ENCODE measurements at regions of chr7 and their contacts with region 1.

Region 1: GRCh38 chr7:151808400-151809183 is 68.3 kb downstream of the PRKAG2 start:
- DNase-seq: peak; percentile 87 to 93 (median 89)
- H3K4me3 ChIP-seq: peak overlapping the region in 1 of 3 experiments; percentile 55
- H3K4me3 Mint-ChIP-seq: peak overlapping the region; percentile 61 to 90
- H3K27ac ChIP-seq: peak overlapping the region; percentile 92 to 96
- H3K27ac Mint-ChIP-seq: peak overlapping the region; percentile 97 to 99 (median 98)
- H3K4me1 ChIP-seq: peaks cover 53 to 54% of the 10 kb centered on the region in 2 donors
- H3K4me1 Mint-ChIP-seq: peaks cover 67% of the 10 kb centered on the region
- H3K27me3 ChIP-seq: no peaks in the 10 kb centered on the region
- H3K27me3 Mint-ChIP-seq: peaks cover 0 to 7% (median 0%) of the 10 kb centered on the region in 3 donors
- CTCF ChIP-seq: peak; percentile 11

Region 2: DNA sequence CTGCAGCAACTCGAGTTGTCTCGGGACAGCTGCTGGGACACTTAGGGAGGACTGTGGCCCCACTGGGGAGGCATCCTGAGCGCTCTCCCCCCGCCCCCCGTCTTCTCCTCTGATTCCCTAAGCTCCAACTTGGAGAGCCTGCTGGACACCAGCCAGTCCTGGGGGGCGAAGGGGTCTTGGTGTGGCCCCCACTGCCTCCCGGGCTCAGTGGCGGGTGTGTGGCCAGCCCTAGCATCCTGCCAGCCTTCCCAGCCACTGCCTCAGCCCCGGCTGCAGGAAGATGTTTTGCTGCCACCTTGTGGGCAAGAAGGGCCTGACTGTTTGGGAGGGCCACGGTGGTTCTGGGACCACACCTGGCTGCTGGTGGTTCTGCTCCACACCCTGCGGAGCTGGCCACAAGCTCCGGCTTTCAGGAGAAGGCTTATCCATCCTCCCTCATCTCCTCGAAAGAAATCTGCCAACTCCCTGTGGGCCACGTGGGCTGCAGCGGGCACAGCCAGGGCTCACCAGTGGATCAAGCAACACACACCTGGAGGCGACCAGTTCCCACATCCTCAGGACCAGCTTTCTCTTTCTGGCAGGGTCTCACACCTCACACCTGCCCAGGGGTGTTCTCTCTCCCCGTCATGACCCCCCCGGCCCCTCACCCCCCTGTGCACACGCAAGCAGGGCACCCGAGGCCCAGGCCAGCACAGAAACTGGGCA is 697.5 kb before region 1 on chr7:
- intact Hi-C with region 1: no loop called
- DNase-seq: peak; percentile 61 to 74 (median 72)
- H3K4me3 ChIP-seq: no peak overlapping the region
- H3K4me3 Mint-ChIP-seq: no peak overlapping the region
- H3K27ac ChIP-seq: no peak overlapping the region
- H3K27ac Mint-ChIP-seq: no peak overlapping the region
- H3K4me1 ChIP-seq: peaks cover 3 to 7% of the 10 kb centered on the region in 2 donors
- H3K4me1 Mint-ChIP-seq: peaks cover 16% of the 10 kb centered on the region
- H3K27me3 ChIP-seq: peaks cover 2 to 17% of the 10 kb centered on the region in 2 donors
- H3K27me3 Mint-ChIP-seq: peaks cover 21 to 29% (median 21%) of the 10 kb centered on the region in 3 donors
- CTCF ChIP-seq: peak; percentile 89

Region 3: GRCh38 chr7:151744656-151745638 is 63.6 kb before region 1 on chr7:
- intact Hi-C with region 1: no loop called
- DNase-seq: peak; percentile 92 to 99 (median 93)
- H3K4me3 ChIP-seq: no peak overlapping the region
- H3K4me3 Mint-ChIP-seq: peak overlapping the region; percentile 32 to 50
- H3K27ac ChIP-seq: peak overlapping the region; percentile 36 to 63
- H3K27ac Mint-ChIP-seq: peak overlapping the region; percentile 70 to 96 (median 92)
- H3K4me1 ChIP-seq: peaks cover 40 to 41% of the 10 kb centered on the region in 2 donors
- H3K4me1 Mint-ChIP-seq: peaks cover 52% of the 10 kb centered on the region
- H3K27me3 ChIP-seq: no peaks in the 10 kb centered on the region
- H3K27me3 Mint-ChIP-seq: peaks cover 0 to 3% (median 2%) of the 10 kb centered on the region in 3 donors
- CTCF ChIP-seq: peak; percentile 40

Region 4: GRCh38 chr7:151838861-151839391 is 30.3 kb after region 1 on chr7:
- intact Hi-C with region 1: loop called in 1 of 2 experiments (anchors 2 kb)
- DNase-seq: peak; percentile 77 to 84 (median 78)
- H3K4me3 ChIP-seq: peak overlapping the region in 1 of 3 experiments; percentile 65
- H3K4me3 Mint-ChIP-seq: peak overlapping the region; percentile 69 to 82
- H3K27ac ChIP-seq: peak overlapping the region; percentile 81 to 88
- H3K27ac Mint-ChIP-seq: peak overlapping the region; percentile 94 to 97 (median 95)
- H3K4me1 ChIP-seq: peaks cover 51 to 53% of the 10 kb centered on the region in 2 donors
- H3K4me1 Mint-ChIP-seq: peaks cover 54% of the 10 kb centered on the region
- H3K27me3 ChIP-seq: no peaks in the 10 kb centered on the region
- H3K27me3 Mint-ChIP-seq: peaks cover 0 to 6% (median 0%) of the 10 kb centered on the region in 3 donors
- CTCF ChIP-seq: no peak

Region 5: GRCh38 chr7:151851145-151851751 is 42.7 kb after region 1 on chr7:
- intact Hi-C with region 1: loop called in 1 of 2 experiments (anchors 5 kb)
- DNase-seq: peak; percentile 90 to 98 (median 98)
- H3K4me3 ChIP-seq: peak overlapping the region; percentile 21 to 66 (median 30)
- H3K4me3 Mint-ChIP-seq: peak overlapping the region; percentile 69 to 85
- H3K27ac ChIP-seq: peak overlapping the region; percentile 97 to 98
- H3K27ac Mint-ChIP-seq: peak overlapping the region; percentile 98 to 100 (median 100)
- H3K4me1 ChIP-seq: peaks cover 69 to 74% of the 10 kb centered on the region in 2 donors
- H3K4me1 Mint-ChIP-seq: peaks cover 73% of the 10 kb centered on the region
- H3K27me3 ChIP-seq: no peaks in the 10 kb centered on the region
- H3K27me3 Mint-ChIP-seq: peaks cover 0 to 3% (median 1%) of the 10 kb centered on the region in 3 donors
- CTCF ChIP-seq: no peak

Region 6: GRCh38 chr7:151876899-151877777 is 68.5 kb after region 1 on chr7 and contains the start of gene PRKAG2:
- intact Hi-C with region 1: no loop called
- DNase-seq: peak; percentile 74 to 80 (median 74)
- H3K4me3 ChIP-seq: peak within 1 kb of the TSS; percentile 82 to 99 (median 98)
- H3K4me3 Mint-ChIP-seq: peak within 1 kb of the TSS; percentile 99
- H3K27ac ChIP-seq: peak within 1 kb of the TSS; percentile 97
- H3K27ac Mint-ChIP-seq: peak within 1 kb of the TSS; percentile 93 to 98 (median 97)
- H3K4me1 ChIP-seq: peaks cover 22 to 39% of the 10 kb centered on the region in 2 donors
- H3K4me1 Mint-ChIP-seq: peaks cover 29% of the 10 kb centered on the region
- H3K27me3 ChIP-seq: no peaks in the 10 kb centered on the region
- H3K27me3 Mint-ChIP-seq: peaks cover 0 to 3% (median 0%) of the 10 kb centered on the region in 3 donors
- CTCF ChIP-seq: peak; percentile 12
- polyA plus RNA-seq, gene PRKAG2: 29.2 to 59.8 (median 30.9) TPM

Region 7: GRCh38 chr7:151925446-151926335 is 117.1 kb after region 1 on chr7:
- intact Hi-C with region 1: loop called in 1 of 2 experiments (anchors 10 kb)
- DNase-seq: peak; percentile 78 to 86 (median 85)
- H3K4me3 ChIP-seq: peak overlapping the region in 1 of 3 experiments; percentile 46
- H3K4me3 Mint-ChIP-seq: peak overlapping the region; percentile 45 to 78
- H3K27ac ChIP-seq: peak overlapping the region; percentile 99 to 100
- H3K27ac Mint-ChIP-seq: peak overlapping the region; percentile 98 to 100 (median 100)
- H3K4me1 ChIP-seq: peaks cover 69 to 70% of the 10 kb centered on the region in 2 donors
- H3K4me1 Mint-ChIP-seq: peaks cover 65% of the 10 kb centered on the region
- H3K27me3 ChIP-seq: no peaks in the 10 kb centered on the region
- H3K27me3 Mint-ChIP-seq: peaks cover 0 to 2% (median 0%) of the 10 kb centered on the region in 3 donors
- CTCF ChIP-seq: no peak

Region 8: GRCh38 chr7:151936207-151936606 is 127.6 kb after region 1 on chr7:
- intact Hi-C with region 1: loop called in 1 of 2 experiments (anchors 5 kb)
- DNase-seq: peak; percentile 65 to 87 (median 85)
- H3K4me3 ChIP-seq: peak overlapping the region in 1 of 3 experiments; percentile 61
- H3K4me3 Mint-ChIP-seq: peak overlapping the region; percentile 56 to 81
- H3K27ac ChIP-seq: peak overlapping the region; percentile 92 to 93
- H3K27ac Mint-ChIP-seq: peak overlapping the region; percentile 97 to 99 (median 98)
- H3K4me1 ChIP-seq: peaks cover 90 to 91% of the 10 kb centered on the region in 2 donors
- H3K4me1 Mint-ChIP-seq: peaks cover 86% of the 10 kb centered on the region
- H3K27me3 ChIP-seq: no peaks in the 10 kb centered on the region
- H3K27me3 Mint-ChIP-seq: peaks cover 0 to 5% (median under 1%) of the 10 kb centered on the region in 3 donors
- CTCF ChIP-seq: no peak

Measured in CD14-positive monocyte (primary cell).